ENCODE measurements at regions of chr11 and their contacts with region 1.

Region 1: DNA sequence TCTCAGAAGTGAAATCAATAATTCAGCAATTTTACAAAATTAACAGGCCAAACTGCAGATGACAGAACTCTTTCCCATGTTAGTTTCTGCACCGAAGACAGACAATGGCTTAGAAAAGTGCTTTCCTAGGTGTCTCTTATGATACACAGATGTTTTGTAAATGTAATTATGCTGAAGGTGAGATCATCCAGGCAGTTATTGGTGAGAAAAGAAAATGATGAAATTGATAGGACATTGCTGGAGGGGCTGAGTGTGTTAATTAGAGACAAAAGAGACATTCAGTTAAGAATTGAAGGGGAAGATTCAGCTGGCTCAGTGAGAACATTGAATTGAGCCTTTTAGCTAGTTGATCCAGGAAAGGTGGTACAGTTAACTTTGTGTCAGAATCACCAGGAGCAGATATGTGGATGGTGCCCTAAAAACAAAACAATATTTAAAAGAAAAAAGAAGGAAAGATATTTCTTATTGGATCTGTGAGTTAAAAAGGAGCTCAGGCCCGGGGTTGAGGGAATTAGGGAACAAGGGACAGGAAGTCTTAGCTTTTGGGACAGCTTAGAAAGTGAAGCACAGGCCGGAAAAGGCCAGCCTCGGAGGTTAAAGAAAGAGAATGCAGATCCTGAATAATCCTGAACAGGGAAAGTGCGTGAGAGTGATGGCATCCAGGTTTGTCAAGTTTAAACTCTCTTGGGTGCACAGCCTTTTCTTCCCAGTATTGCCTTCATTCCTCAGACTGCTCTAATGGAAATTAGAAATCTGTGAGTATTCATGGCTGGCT is 16.9 kb downstream of the ARHGAP42 start:
- DNase-seq: no peak

Region 2: GRCh38 chr11:101974771-101975170 is 1270.8 kb after region 1 on chr11:
- intact Hi-C with region 1: loop called in 1 of 2 experiments (anchors 5 kb)
- DNase-seq: no peak

Measured in posterior vena cava (tissue), 2 donors.